Caco-2 (cell line): ENCODE measurements at regions of chr1 and their contacts with region 1.

Region 1: DNA sequence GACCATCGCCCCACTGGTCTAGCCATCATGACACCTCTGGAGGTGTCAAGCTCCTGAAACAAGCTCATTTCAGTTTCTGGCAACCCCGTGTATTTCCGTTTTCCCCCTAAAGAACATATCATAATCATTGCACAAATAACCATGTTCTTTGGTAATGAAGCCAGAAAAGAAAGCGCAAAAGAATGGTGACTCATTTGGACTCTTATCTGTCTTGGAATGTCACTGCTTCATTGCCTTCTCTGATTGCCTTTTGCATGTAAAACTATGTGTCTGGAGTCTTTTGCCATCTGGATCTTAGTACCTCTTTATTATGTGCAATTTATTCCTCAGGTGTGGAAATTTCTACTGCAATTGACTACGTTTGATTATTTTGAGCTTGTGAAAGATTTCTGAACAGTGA is 110.5 kb downstream of the COLGALT2 start:
- DNase-seq: peak in 1 of 2 experiments; percentile 40
- H3K4me3 ChIP-seq: no peak overlapping the region
- H3K4me3 Mint-ChIP-seq: peak overlapping the region; percentile 52
- H3K27ac Mint-ChIP-seq: peak overlapping the region; percentile 86
- H3K4me1 ChIP-seq: peaks cover 27% of the 10 kb centered on the region
- H3K4me1 Mint-ChIP-seq: peaks cover 23% of the 10 kb centered on the region
- H3K27me3 ChIP-seq: no peaks in the 10 kb centered on the region
- H3K27me3 Mint-ChIP-seq: no peaks in the 10 kb centered on the region
- CTCF ChIP-seq: no peak

Region 2: DNA sequence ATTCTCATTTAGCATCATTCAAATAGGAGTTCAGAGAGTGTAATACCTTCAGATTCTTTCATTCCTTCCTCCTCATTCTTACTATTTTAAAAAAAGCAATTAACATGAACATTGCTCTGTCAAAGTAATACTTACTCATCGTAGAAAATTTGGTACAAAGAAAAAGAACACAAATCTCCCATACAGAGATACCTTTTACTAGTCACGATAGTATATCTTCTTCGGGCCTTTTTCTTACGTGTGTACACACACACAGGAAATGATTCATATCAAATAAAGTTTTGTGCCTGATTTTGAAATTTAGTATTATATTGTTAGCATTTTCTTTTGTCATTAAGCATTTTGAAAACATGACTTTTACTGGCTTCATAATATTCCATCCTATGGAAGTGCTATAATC is 389.6 kb before region 1 on chr1:
- CTCF ChIA-PET with region 1: no interaction called
- POLR2A ChIA-PET with region 1: no interaction called
- intact Hi-C with region 1: no loop called
- DNase-seq: no peak
- H3K4me3 ChIP-seq: no peak overlapping the region
- H3K4me3 Mint-ChIP-seq: no peak overlapping the region
- H3K27ac Mint-ChIP-seq: no peak overlapping the region
- H3K4me1 ChIP-seq: no peaks in the 10 kb centered on the region
- H3K4me1 Mint-ChIP-seq: no peaks in the 10 kb centered on the region
- H3K27me3 ChIP-seq: no peaks in the 10 kb centered on the region
- H3K27me3 Mint-ChIP-seq: no peaks in the 10 kb centered on the region
- CTCF ChIP-seq: no peak

Region 3: GRCh38 chr1:183812686-183813569 is 114.1 kb before region 1 on chr1:
- CTCF ChIA-PET with region 1: no interaction called
- POLR2A ChIA-PET with region 1: no interaction called
- intact Hi-C with region 1: no loop called
- DNase-seq: peak; percentile 68 to 84
- H3K4me3 ChIP-seq: peak overlapping the region; percentile 4
- H3K4me3 Mint-ChIP-seq: peak overlapping the region; percentile 76
- H3K27ac Mint-ChIP-seq: peak overlapping the region; percentile 84
- H3K4me1 ChIP-seq: peaks cover 67% of the 10 kb centered on the region
- H3K4me1 Mint-ChIP-seq: peaks cover 49% of the 10 kb centered on the region
- H3K27me3 ChIP-seq: no peaks in the 10 kb centered on the region
- H3K27me3 Mint-ChIP-seq: no peaks in the 10 kb centered on the region
- CTCF ChIP-seq: no peak

Region 4: GRCh38 chr1:183891158-183891856 is 35.7 kb before region 1 on chr1:
- CTCF ChIA-PET with region 1: no interaction called
- POLR2A ChIA-PET with region 1: no interaction called
- intact Hi-C with region 1: loop called (anchors 2 kb)
- DNase-seq: no peak
- H3K4me3 ChIP-seq: no peak overlapping the region
- H3K4me3 Mint-ChIP-seq: no peak overlapping the region
- H3K27ac Mint-ChIP-seq: no peak overlapping the region
- H3K4me1 ChIP-seq: peaks cover 13% of the 10 kb centered on the region; the same call in 1 of the 2 replicates
- H3K4me1 Mint-ChIP-seq: no peaks in the 10 kb centered on the region
- H3K27me3 ChIP-seq: no peaks in the 10 kb centered on the region
- H3K27me3 Mint-ChIP-seq: no peaks in the 10 kb centered on the region
- CTCF ChIP-seq: no peak

Region 5: DNA sequence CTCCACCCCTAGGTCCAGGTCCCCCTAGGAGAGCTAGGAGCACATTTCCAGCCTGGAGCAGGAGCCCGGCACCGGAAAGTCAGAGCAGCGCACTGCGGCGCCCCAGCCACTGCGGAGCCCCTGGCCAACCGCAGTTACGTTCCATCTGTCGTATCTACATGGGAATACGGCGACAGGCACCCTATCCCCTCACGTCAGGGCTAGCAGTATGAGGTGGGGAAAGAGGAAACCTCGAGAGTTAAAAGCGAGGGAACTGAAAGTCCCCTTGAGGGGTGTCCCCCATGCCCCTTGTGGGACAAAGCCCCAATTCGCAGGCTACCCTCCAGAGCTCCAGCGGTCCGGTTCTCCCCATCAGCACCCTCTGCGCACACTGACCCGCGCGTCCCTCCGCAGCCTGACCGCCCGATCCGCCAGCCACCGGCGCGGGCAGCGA is 109.5 kb after region 1 on chr1:
- CTCF ChIA-PET with region 1: no interaction called
- POLR2A ChIA-PET with region 1: no interaction called
- intact Hi-C with region 1: loop called (anchors 2 kb)
- DNase-seq: peak; percentile 51 to 62
- H3K4me3 ChIP-seq: peak overlapping the region; percentile 82
- H3K4me3 Mint-ChIP-seq: peak overlapping the region; percentile 86
- H3K27ac Mint-ChIP-seq: no peak overlapping the region
- H3K4me1 ChIP-seq: peaks cover 15% of the 10 kb centered on the region; the same call in 1 of the 2 replicates
- H3K4me1 Mint-ChIP-seq: peaks cover 26% of the 10 kb centered on the region
- H3K27me3 ChIP-seq: no peaks in the 10 kb centered on the region
- H3K27me3 Mint-ChIP-seq: peaks cover 5% of the 10 kb centered on the region
- CTCF ChIP-seq: no peak

Region 6: DNA sequence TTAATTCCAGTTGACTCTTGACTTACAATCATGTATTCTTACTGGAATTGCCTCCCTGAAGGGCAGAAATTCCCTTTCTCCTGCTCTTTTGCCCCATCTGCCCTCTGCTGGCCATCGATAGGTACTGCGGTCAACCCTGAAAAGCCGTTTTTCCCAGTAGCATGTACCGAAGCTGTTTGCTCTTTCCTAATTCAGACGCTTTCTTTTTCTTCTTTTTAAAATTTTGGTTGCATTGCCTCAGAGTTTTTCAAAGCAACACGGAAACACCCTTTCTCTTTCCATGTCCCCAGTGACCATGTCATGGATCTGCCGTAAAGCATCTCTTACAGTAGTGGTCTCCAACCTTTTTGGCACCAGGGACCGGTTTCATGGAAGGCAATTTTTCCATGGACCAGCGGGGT is 295.7 kb after region 1 on chr1:
- CTCF ChIA-PET with region 1: no interaction called
- POLR2A ChIA-PET with region 1: no interaction called
- intact Hi-C with region 1: loop called (anchors 5 kb)
- DNase-seq: peak in 1 of 2 experiments; percentile 66
- H3K4me3 ChIP-seq: no peak overlapping the region
- H3K4me3 Mint-ChIP-seq: no peak overlapping the region
- H3K27ac Mint-ChIP-seq: no peak overlapping the region
- H3K4me1 ChIP-seq: no peaks in the 10 kb centered on the region
- H3K4me1 Mint-ChIP-seq: peaks cover 6% of the 10 kb centered on the region
- H3K27me3 ChIP-seq: no peaks in the 10 kb centered on the region
- H3K27me3 Mint-ChIP-seq: peaks cover 7% of the 10 kb centered on the region
- CTCF ChIP-seq: peak; percentile 91 to 95